HEK293 (cell line): ENCODE measurements at regions of chr17 and their contacts with region 1.

Region 1: DNA sequence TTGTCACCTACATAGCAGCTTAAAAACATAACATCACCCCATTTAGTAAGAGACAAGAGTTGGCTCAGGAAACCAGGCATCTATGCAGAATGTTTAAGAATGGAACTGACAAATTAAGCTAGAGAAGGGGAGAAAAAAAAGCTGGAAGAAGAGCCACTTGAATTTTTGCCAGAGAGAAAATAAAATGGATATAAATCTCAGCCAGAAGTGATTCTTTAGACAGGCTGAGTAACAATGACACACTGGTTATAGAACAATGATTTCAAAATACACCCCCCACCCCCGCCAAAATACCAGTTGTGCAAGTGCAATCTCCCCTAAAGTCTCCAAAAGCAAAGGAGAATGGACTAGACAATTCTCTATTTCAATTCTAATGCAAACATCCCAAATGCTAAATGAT is 22.4 kb downstream of the LSM12 start:
- H3K4me3 ChIP-seq: no peak overlapping the region
- H3K27ac ChIP-seq: no peak overlapping the region
- H3K4me1 ChIP-seq: peaks cover 11% of the 10 kb centered on the region
- CTCF ChIP-seq: no peak

Region 2: DNA sequence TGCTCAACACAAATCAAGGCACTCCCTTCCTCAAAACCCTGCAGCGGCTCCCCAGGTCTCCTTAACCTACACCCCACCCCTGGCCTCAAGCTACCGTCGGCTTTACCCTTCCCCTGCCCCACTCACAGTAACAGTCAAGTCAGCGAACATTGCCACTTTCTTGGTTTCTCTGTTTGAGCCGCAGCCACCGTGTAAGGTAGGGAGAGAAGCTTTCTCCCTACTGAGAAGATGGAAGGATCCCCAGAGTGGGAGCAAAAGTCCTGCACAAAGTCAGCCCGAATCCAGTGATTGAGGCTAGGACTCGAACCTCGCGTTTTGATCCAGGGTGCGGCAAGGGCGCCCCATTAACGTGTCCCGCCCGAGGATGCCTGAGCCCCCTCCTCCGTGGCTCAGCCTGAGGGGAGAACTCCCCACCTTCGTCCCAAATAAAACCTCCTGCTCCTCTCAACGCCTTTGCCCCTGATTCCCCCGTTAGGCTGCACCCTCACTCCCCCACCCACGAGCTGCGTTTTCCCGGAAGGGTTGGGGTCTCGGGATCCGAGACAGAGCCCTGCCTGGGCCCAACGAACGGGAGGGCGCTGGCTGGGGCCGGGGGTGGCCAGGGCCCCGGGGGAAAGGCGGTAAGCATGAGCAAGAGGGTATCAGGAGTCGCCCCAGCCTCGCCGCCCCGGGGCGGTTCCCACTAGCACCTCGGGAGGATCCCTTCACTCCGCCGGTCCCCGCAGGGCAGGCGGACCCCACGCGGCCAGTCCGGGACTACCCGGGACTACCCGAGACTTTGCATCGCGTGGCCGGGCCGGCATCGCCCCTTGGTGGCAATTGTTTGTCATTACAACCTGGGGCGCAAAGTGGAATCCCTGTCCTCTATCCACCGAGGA is 49.6 kb before region 1 on chr17:
- CTCF ChIA-PET with region 1: interaction called, 16 read pairs
- POLR2A ChIA-PET with region 1: no interaction called
- H3K4me3 ChIP-seq: peak overlapping the region; percentile 14
- H3K27ac ChIP-seq: no peak overlapping the region
- H3K4me1 ChIP-seq: no peaks in the 10 kb centered on the region
- CTCF ChIP-seq: peak; percentile 97

Region 3: DNA sequence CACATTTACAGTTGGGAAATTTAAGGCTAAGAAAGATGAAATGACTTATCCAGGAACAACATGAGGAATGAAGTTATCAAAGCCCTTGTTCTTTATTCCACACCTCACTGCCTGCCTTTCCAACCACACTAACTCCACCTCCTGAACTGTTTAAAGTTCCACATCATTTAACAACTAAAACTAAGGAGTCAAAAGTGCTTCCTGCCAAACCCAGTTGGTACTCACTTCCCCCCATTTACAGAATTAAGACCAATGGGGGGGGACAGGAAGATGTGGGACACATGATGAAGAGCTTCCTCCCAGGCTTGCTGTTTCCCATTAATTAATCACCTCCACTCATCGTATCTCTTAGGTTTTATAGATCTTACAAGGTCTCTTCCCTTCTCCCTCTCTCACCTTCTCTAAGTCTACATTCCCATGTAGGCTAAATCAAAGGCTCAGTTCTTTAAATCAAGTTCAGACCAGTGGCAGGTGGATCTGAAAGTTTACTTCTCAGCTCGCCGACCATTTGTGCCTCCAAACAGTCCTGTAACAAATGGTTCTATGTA is 10.1 kb before region 1 on chr17:
- CTCF ChIA-PET with region 1: interaction called, 26 read pairs
- POLR2A ChIA-PET with region 1: no interaction called
- H3K4me3 ChIP-seq: no peak overlapping the region
- H3K27ac ChIP-seq: no peak overlapping the region
- H3K4me1 ChIP-seq: no peaks in the 10 kb centered on the region
- CTCF ChIP-seq: no peak

Region 4: GRCh38 chr17:44070455-44071197 is 26.6 kb after region 1 on chr17 and contains the start of gene G6PC3:
- CTCF ChIA-PET with region 1: interaction called, 14 read pairs
- POLR2A ChIA-PET with region 1: interaction called, 3 read pairs
- H3K4me3 ChIP-seq: peak within 1 kb of the TSS; percentile 50
- H3K27ac ChIP-seq: peak within 1 kb of the TSS; percentile 97
- H3K4me1 ChIP-seq: peaks cover 12% of the 10 kb centered on the region
- CTCF ChIP-seq: peak; percentile 6